PC-9 (cell line): ENCODE measurements at regions of chr3 and their contacts with region 1.

Region 1: DNA sequence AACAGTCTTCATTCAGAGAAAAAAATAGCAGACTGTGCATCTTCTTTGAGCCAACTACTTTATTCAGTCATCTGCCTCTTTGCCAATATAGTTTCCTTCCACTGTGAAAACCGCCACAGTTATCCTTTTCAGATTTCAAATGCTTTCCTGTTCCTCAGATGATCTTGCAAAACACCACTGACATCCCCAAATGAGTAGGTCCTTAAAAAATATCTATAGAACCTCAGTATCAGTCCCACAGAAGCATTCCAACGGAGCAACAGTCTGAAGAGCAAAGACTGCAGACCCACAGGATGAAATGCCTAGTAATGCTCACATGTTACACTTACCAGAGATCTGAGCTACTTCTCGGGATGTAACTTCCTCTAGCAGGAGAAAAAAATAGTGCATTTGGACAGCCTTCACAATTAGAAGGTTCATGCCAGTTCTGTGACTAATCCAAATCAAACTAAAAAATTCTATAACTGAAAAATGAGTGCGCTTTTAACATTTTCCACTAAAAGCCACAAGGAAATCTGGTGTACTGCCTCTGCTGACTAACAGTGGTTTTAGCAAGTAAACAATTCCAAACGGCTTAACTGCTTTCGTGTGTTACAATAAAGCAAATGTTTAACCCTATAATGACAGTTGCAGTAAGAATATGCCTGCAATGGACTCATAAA is at the start of gene ANKRD28:
- DNase-seq: peak; percentile 21 to 92
- H3K4me3 ChIP-seq: peak within 1 kb of the TSS; percentile 60
- H3K27ac ChIP-seq: peak within 1 kb of the TSS; percentile 92
- H3K4me1 ChIP-seq: peaks cover 83% of the 10 kb centered on the region
- H3K27me3 ChIP-seq: no peaks in the 10 kb centered on the region
- CTCF ChIP-seq: peak; percentile 54; the same call in 1 of the 2 replicates
- total RNA-seq, gene ANKRD28: 59.7 and 82.6 TPM in 2 replicates

Region 2: DNA sequence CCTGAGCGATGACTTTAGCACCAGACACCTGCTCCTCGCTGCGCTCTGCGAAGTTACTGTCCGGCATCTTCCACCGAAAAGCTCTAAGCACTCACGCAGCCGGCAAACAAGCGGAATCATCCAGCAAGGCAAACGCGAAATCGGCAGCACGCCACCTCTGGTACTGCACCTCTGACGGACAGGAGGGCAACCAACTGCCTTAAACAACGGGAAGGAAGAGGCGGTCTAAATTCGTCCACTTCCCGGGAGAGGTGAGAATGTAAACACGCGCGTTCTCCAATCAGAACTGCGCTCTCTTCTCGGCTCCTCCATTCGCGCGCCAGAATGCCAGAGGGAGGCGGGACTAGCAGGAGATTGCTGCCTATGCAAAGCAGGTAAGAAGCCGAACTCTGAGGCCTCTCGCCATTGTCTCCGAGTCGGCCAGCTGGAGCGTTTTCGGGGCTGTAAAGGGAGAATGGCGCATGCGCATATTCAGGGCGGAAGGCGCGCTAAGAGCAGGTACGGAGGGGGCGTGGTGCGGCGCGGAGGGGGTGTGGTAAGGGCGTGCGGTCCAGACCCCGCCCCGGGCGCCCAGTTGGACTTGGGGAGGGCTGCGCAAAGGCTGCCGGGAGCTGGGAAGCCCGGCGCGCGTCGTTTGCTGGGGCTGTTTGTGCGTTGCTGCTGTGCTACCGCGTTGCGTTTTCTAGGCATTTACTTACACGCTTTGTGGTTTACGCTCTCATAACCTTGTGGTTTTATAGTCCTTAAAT is 196.2 kb before region 1 on chr3 and contains the starts of genes BTD and HACL1:
- CTCF ChIA-PET with region 1: no interaction called
- POLR2A ChIA-PET with region 1: no interaction called
- intact Hi-C with region 1: loop called (anchors 10 kb)
- DNase-seq: peak; percentile 96 to 98
- H3K4me3 ChIP-seq: peak within 1 kb of the TSS; percentile 79
- H3K27ac ChIP-seq: peak within 1 kb of the TSS; percentile 66
- H3K4me1 ChIP-seq: peaks cover 18% of the 10 kb centered on the region
- H3K27me3 ChIP-seq: no peaks in the 10 kb centered on the region
- CTCF ChIP-seq: peak; percentile 33; the same call in 1 of the 2 replicates
- total RNA-seq, gene BTD: 15.6 and 18.1 TPM in 2 replicates
- total RNA-seq, gene HACL1: 28.7 and 31.7 TPM in 2 replicates

Region 3: DNA sequence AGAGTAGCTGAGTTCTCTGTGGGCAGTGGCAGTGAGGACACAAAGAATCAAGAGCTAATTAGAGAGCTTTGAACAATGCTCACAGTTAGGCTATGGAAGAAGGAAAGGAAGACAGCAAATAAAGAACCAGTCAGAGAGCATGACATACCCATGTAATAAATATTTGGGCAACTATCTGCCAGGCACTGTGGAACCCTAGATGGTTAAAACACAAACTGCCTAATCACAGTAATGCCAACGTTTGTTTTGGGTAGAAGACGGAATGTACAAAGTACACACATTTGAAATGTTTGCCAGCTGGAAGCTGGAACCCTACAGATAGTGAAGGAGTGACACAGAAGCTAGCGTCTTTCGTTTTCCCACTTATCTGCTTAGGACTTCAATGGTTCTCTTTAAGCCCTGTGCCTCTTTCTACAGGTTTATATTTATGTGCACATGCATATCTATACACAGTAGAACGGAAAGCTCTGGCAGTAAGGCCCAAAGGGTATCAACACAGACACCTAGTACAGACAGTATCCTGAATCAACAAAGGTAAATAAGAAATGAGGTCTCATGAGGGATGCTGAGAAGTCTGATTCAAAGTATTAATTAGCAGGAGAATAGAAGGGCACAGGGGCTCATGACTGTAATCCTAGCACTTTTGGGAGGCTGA is 44.6 kb before region 1 on chr3:
- CTCF ChIA-PET with region 1: no interaction called
- POLR2A ChIA-PET with region 1: interaction called, 10 read pairs
- intact Hi-C with region 1: no loop called
- DNase-seq: no peak
- H3K4me3 ChIP-seq: no peak overlapping the region
- H3K27ac ChIP-seq: peak overlapping the region; percentile 38; the same call in 1 of the 2 replicates
- H3K4me1 ChIP-seq: peaks cover 6% of the 10 kb centered on the region; the same call in 1 of the 2 replicates
- H3K27me3 ChIP-seq: no peaks in the 10 kb centered on the region
- CTCF ChIP-seq: no peak

Region 4: GRCh38 chr3:15781637-15782402 is 16.0 kb before region 1 on chr3:
- CTCF ChIA-PET with region 1: interaction called, 10 read pairs
- POLR2A ChIA-PET with region 1: interaction called, 3 read pairs
- intact Hi-C with region 1: no loop called
- DNase-seq: no peak
- H3K4me3 ChIP-seq: no peak overlapping the region
- H3K27ac ChIP-seq: no peak overlapping the region
- H3K4me1 ChIP-seq: no peaks in the 10 kb centered on the region
- H3K27me3 ChIP-seq: no peaks in the 10 kb centered on the region
- CTCF ChIP-seq: no peak

Region 5: GRCh38 chr3:15815696-15816095 is 17.9 kb after region 1 on chr3:
- CTCF ChIA-PET with region 1: no interaction called
- POLR2A ChIA-PET with region 1: no interaction called
- intact Hi-C with region 1: no loop called
- DNase-seq: peak in 1 of 2 experiments; percentile 35
- H3K4me3 ChIP-seq: no peak overlapping the region
- H3K27ac ChIP-seq: no peak overlapping the region
- H3K4me1 ChIP-seq: no peaks in the 10 kb centered on the region
- H3K27me3 ChIP-seq: no peaks in the 10 kb centered on the region
- CTCF ChIP-seq: peak; percentile 68